ENCODE measurements at regions of chr21 and their contacts with region 1.

Region 1: GRCh38 chr21:41167348-41168342 is at the start of gene BACE2:
- DNase-seq: peak; percentile 68
- ATAC-seq: peak; percentile 92
- H3K4me3 ChIP-seq: peak within 1 kb of the TSS; percentile 58
- H3K27ac ChIP-seq: peak within 1 kb of the TSS; percentile 49
- H3K4me1 ChIP-seq: no peaks in the 10 kb centered on the region; the same call in 1 of the 2 replicates
- H3K27me3 ChIP-seq: peaks cover 3% of the 10 kb centered on the region
- CTCF ChIP-seq: peak; percentile 48
- POLR2A ChIP-seq: 0 out of 2 replicates have a peak, but pooled peaks have one; percentile 30
- RAD21 ChIP-seq: no peak
- total RNA-seq, gene BACE2: 17.0 and 18.1 TPM in 2 replicates

Region 2: DNA sequence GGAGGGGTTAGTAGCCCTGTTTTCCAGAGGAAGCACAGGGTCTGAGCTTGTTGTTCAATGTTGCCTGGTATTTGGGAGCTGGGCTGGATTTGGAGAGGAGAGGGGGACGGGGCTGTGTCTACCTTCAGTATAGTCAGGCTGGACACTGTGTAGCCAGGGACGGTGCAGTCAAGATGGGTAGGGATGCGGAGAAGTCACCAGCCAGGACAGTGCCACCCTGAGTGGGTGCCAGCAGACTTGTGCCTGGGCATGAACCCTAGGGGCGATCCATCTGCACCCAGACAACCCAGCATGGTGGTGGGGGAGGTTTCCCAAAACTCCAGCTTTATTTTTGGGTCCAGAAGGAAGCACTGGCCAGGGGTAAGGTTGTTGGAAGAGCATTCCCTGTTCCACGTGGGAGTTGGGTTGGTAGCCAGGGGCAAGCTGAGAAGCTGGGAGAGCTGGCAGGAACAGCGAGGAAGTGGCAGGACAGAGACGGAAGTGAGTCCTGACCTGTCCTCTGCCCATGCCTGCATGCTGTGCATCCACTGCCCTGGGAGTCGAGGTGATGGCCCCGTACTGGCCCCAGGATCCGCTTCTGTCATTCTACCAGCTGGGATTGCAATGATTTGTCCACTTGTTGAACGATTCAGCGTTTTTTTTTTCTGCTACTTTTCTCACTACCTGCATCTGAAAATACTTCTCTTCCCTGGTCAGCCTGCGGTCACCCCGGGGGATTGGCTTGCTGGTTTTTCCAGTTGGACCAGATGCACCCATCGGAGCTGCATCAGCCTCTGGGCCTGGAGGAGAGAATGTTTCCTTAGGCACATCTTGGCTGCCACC is 368.4 kb after region 1 on chr21:
- CTCF ChIA-PET with region 1: no interaction called
- POLR2A ChIA-PET with region 1: no interaction called
- dilution Hi-C with region 1: no loop called
- in situ Hi-C with region 1: loop called (anchors 25 kb)
- intact Hi-C with region 1: no loop called
- DNase-seq: no peak
- ATAC-seq: no peak
- H3K4me3 ChIP-seq: no peak overlapping the region
- H3K27ac ChIP-seq: no peak overlapping the region
- H3K4me1 ChIP-seq: no peaks in the 10 kb centered on the region
- H3K27me3 ChIP-seq: peaks cover 28% of the 10 kb centered on the region
- CTCF ChIP-seq: no peak
- POLR2A ChIP-seq: no peak
- RAD21 ChIP-seq: no peak

Measured in IMR-90 (cell line).